H1 (cell line): ENCODE measurements at regions of chr5 and their contacts with region 1.

Region 1: DNA sequence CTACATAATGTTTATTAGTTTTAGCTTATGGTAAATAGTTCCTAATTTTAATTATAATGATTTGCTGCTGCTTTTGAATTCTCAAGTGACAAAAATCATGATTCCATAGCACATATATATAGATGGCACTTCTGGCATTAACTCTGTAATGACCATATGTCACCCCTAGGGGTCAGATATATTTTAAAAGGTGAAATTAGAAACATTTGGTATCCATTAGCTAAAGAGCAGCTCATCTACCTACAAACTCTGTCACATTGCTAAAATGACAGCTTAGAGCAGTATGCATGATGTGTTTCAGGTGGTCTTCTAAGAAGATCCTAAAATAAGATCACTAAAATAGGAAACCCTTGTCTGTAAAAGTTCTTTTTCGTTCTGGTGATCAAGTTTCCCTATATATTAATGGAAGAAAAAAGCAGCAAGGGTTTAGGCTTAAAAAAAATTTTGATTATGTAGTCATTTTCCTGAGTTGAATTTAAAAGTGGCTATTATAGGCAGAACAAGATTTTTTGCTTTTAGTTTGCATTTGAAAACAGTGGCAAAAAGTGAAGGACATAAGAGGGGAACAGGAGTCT is 157.7 kb upstream of the POU5F2 start:
- DNase-seq: no peak
- H3K4me3 ChIP-seq: no peak overlapping the region
- H3K27ac ChIP-seq: no peak overlapping the region
- H3K4me1 ChIP-seq: no peaks in the 10 kb centered on the region
- H3K27me3 ChIP-seq: peaks cover 0 to 1% (median 0%) of the 10 kb centered on the region in 4 experiments; a peak in 1 of 7 replicates
- CTCF ChIP-seq: peak in 2 of 3 experiments; percentile 16 to 49; a peak in 2 of 4 replicates
- EP300 ChIP-seq: no peak
- POLR2A ChIP-seq: no peak
- RAD21 ChIP-seq: peak; percentile 17 to 28; a peak in 3 of 4 replicates

Region 2: DNA sequence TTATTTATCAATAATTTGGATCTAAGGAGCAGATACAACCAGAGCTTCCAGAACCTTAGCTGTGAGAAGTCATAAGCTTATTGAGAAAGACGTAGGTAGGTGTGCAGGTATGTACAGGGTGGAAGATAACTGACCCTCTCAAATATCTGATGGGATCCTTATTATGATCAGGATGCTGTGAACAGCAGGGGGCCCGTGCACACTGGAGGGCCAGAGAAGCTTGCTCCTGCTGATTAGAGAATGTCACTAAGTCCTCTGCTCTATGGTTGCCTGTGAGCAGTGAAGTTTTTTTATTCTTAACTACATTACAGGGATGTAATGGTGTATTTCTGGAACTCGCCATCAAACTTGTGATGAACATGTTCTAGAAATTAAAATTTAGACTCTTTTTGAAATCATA is 48.8 kb before region 1 on chr5:
- CTCF ChIA-PET with region 1: no interaction called
- POLR2A ChIA-PET with region 1: no interaction called
- DNase-seq: no peak
- H3K4me3 ChIP-seq: no peak overlapping the region
- H3K27ac ChIP-seq: no peak overlapping the region
- H3K4me1 ChIP-seq: no peaks in the 10 kb centered on the region
- H3K27me3 ChIP-seq: no peaks in the 10 kb centered on the region
- CTCF ChIP-seq: no peak
- EP300 ChIP-seq: no peak
- POLR2A ChIP-seq: no peak
- RAD21 ChIP-seq: no peak

Region 3: DNA sequence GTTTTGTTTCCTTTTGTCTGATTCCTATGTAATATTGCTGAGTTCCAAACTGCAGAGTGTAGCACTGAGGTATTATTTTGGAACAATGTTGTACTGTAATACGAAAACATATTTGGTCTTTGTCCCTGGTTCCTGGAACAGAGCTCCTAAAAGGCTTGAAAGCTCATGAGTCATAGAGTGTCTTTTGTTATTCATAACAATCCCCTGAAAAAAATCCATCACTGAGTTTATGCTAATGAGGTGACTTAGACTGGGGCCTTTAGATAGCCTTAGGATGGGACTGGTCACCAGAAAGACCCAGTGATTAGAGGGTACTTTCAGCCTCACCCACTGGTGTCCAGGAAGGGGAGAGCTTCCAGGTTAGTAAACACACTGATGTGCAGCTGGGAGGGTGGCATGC is 25.0 kb before region 1 on chr5:
- CTCF ChIA-PET with region 1: interaction called, 11 read pairs
- POLR2A ChIA-PET with region 1: no interaction called
- DNase-seq: no peak
- H3K4me3 ChIP-seq: no peak overlapping the region
- H3K27ac ChIP-seq: no peak overlapping the region
- H3K4me1 ChIP-seq: peaks cover 0 to 5% (median 2%) of the 10 kb centered on the region in 4 experiments; a peak in 1 of 7 replicates
- H3K27me3 ChIP-seq: no peaks in the 10 kb centered on the region
- CTCF ChIP-seq: no peak
- EP300 ChIP-seq: no peak
- POLR2A ChIP-seq: no peak
- RAD21 ChIP-seq: no peak

Region 4: GRCh38 chr5:93886917-93887361 is 12.2 kb before region 1 on chr5:
- CTCF ChIA-PET with region 1: interaction called, 16 read pairs
- POLR2A ChIA-PET with region 1: no interaction called
- DNase-seq: no peak
- H3K4me3 ChIP-seq: no peak overlapping the region
- H3K27ac ChIP-seq: no peak overlapping the region
- H3K4me1 ChIP-seq: no peaks in the 10 kb centered on the region; a peak in 1 of 7 replicates
- H3K27me3 ChIP-seq: no peaks in the 10 kb centered on the region
- CTCF ChIP-seq: no peak
- EP300 ChIP-seq: no peak
- POLR2A ChIP-seq: no peak
- RAD21 ChIP-seq: no peak

Region 5: DNA sequence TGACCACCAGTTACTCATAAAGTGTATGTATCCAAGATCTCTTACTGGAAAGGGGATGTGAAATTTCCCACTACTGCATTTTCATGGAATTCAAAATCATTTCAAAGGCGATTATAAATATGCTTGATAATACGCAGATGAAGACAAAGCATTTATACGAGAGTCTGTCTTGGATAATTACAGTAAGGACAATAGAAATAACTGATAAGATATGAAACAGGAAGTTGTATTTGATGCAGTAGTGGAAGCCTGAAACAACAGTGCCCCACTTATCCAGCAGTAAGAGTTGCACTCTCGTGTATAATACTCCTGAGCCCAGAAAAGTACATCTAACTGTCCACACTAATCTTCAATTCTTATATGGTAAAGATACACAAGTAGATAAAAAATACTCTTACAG is 31.0 kb after region 1 on chr5:
- CTCF ChIA-PET with region 1: no interaction called
- POLR2A ChIA-PET with region 1: no interaction called
- DNase-seq: no peak
- H3K4me3 ChIP-seq: no peak overlapping the region
- H3K27ac ChIP-seq: no peak overlapping the region
- H3K4me1 ChIP-seq: no peaks in the 10 kb centered on the region
- H3K27me3 ChIP-seq: no peaks in the 10 kb centered on the region
- CTCF ChIP-seq: no peak
- EP300 ChIP-seq: no peak
- POLR2A ChIP-seq: no peak
- RAD21 ChIP-seq: no peak